ENCODE measurements at regions of chrX and their contacts with region 1.

Region 1: DNA sequence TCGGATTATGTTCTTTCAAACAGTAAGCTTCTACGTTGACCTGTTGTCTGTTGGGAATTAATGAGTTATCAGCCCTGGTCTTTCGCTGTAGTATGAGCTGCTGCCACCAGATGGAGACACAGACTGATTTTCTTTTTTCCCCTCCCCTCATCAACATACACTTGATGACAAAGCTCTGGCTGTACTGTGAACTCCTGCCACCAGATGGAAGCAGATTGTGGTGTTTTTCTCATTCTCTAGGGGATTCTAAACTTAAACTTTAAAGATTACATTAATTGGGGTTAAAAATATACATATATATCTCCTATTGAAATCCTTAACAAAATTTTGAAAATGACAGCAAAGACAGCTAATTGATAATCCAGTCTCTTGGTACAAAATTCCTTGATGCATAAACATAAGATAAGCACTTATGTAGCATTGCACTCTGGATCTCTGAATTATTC is 44.8 kb downstream of the SMS start:
- DNase-seq: peak; percentile 61
- H3K4me3 ChIP-seq: no peak overlapping the region
- H3K27ac ChIP-seq: 0 out of 2 replicates have a peak overlapping the region, but pooled peaks have one; percentile 9
- H3K4me1 ChIP-seq: peaks cover 5% of the 10 kb centered on the region; the same call in 1 of the 2 replicates
- H3K27me3 ChIP-seq: no peaks in the 10 kb centered on the region
- CTCF ChIP-seq: peak; percentile 94

Region 2: GRCh38 chrX:21559417-21559816 is 425.9 kb before region 1 on chrX:
- CTCF ChIA-PET with region 1: no interaction called
- POLR2A ChIA-PET with region 1: no interaction called
- intact Hi-C with region 1: no loop called
- DNase-seq: no peak
- H3K4me3 ChIP-seq: no peak overlapping the region
- H3K27ac ChIP-seq: no peak overlapping the region
- H3K4me1 ChIP-seq: no peaks in the 10 kb centered on the region
- H3K27me3 ChIP-seq: no peaks in the 10 kb centered on the region
- CTCF ChIP-seq: no peak

Region 3: GRCh38 chrX:22192417-22193060 is 207.2 kb after region 1 on chrX:
- CTCF ChIA-PET with region 1: no interaction called
- POLR2A ChIA-PET with region 1: no interaction called
- intact Hi-C with region 1: loop called (anchors 2 kb)
- DNase-seq: peak in 1 of 2 experiments; percentile 43
- H3K4me3 ChIP-seq: no peak overlapping the region
- H3K27ac ChIP-seq: no peak overlapping the region
- H3K4me1 ChIP-seq: peaks cover 6% of the 10 kb centered on the region; the same call in 1 of the 2 replicates
- H3K27me3 ChIP-seq: no peaks in the 10 kb centered on the region
- CTCF ChIP-seq: peak; percentile 77

Region 4: GRCh38 chrX:23317799-23318724 is 1332.7 kb after region 1 on chrX:
- CTCF ChIA-PET with region 1: no interaction called
- POLR2A ChIA-PET with region 1: no interaction called
- intact Hi-C with region 1: loop called (anchors 1 kb)
- DNase-seq: no peak
- H3K4me3 ChIP-seq: no peak overlapping the region
- H3K27ac ChIP-seq: no peak overlapping the region
- H3K4me1 ChIP-seq: no peaks in the 10 kb centered on the region
- H3K27me3 ChIP-seq: no peaks in the 10 kb centered on the region
- CTCF ChIP-seq: peak; percentile 75

Region 5: GRCh38 chrX:23554304-23554703 is 1568.9 kb after region 1 on chrX:
- CTCF ChIA-PET with region 1: no interaction called
- POLR2A ChIA-PET with region 1: no interaction called
- intact Hi-C with region 1: loop called (anchors 1 kb)
- DNase-seq: peak in 1 of 2 experiments; percentile 40
- H3K4me3 ChIP-seq: no peak overlapping the region
- H3K27ac ChIP-seq: no peak overlapping the region
- H3K4me1 ChIP-seq: no peaks in the 10 kb centered on the region
- H3K27me3 ChIP-seq: no peaks in the 10 kb centered on the region
- CTCF ChIP-seq: peak; percentile 75

Region 6: GRCh38 chrX:23616361-23616760 is 1631.0 kb after region 1 on chrX:
- CTCF ChIA-PET with region 1: no interaction called
- POLR2A ChIA-PET with region 1: no interaction called
- intact Hi-C with region 1: loop called (anchors 1 kb)
- DNase-seq: no peak
- H3K4me3 ChIP-seq: no peak overlapping the region
- H3K27ac ChIP-seq: no peak overlapping the region
- H3K4me1 ChIP-seq: no peaks in the 10 kb centered on the region
- H3K27me3 ChIP-seq: no peaks in the 10 kb centered on the region
- CTCF ChIP-seq: peak; percentile 71